ENCODE measurements at regions of chr4 and their contacts with region 1.

Region 1: GRCh38 chr4:116702951-116703350 is 382.4 kb downstream of the TRAM1L1 start:
- DNase-seq: peak in 2 of 7 donors; percentile 15
- H3K4me3 ChIP-seq: no peak overlapping the region
- H3K27ac ChIP-seq: no peak overlapping the region
- H3K4me1 ChIP-seq: no peaks in the 10 kb centered on the region
- H3K27me3 ChIP-seq: no peaks in the 10 kb centered on the region
- CTCF ChIP-seq: peak in 3 of 6 experiments; percentile 17 to 27 (median 20)
- POLR2A ChIP-seq: no peak

Region 2: DNA sequence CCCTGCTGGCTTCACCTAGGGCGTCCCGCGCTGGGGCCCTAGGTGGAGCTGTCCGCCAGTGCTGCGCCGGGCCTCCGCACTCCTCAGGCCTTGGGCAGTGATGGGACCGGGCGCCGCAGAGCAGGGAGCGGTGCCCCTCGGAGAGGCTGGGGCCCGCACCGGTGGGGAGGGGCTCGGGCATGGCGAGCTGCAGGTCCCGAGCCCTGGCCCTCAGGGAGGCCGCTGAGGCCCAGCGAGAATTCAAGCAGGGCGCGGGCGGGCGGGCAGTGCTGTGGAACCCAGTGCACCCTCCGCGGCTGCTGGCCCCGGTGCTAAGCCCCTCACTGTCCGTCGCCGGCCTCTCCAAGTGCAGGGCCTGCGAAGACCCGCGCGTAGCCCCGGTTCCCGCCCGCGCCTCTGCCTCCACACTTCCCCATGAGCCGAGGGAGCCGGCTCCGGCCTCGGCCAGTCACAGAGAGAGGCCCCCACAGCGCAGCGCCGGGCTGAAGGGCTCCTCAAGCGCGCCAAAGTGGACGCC is 1024.5 kb before region 1 on chr4:
- intact Hi-C with region 1: no loop called
- DNase-seq: no peak
- H3K4me3 ChIP-seq: no peak overlapping the region
- H3K27ac ChIP-seq: no peak overlapping the region
- H3K4me1 ChIP-seq: no peaks in the 10 kb centered on the region
- H3K27me3 ChIP-seq: no peaks in the 10 kb centered on the region
- CTCF ChIP-seq: no peak
- POLR2A ChIP-seq: no peak

Region 3: DNA sequence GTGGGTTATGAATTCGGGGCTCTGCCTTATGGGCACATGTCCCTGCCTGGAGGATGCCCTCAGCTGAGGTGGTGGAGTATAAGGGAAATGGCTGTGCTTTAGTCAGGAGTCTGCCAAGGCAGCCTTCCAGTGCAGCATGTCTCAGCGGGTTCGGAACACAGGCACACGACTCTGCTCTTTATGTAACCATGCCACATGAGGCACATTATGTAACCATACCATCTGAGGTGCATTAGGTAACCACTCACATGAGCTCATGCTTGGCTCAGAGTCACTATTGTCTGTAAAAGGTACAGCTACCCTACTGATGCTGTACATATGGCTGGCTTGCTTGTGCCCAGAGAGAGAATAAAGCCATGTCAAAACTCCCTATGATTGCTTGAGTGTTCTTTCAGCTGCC is 341.2 kb before region 1 on chr4:
- intact Hi-C with region 1: loop called in 1 of 2 experiments (anchors 10 kb)
- DNase-seq: no peak
- H3K4me3 ChIP-seq: no peak overlapping the region
- H3K27ac ChIP-seq: no peak overlapping the region
- H3K4me1 ChIP-seq: no peaks in the 10 kb centered on the region
- H3K27me3 ChIP-seq: no peaks in the 10 kb centered on the region
- CTCF ChIP-seq: no peak
- POLR2A ChIP-seq: no peak

Region 4: GRCh38 chr4:117084866-117085701 is 382.1 kb after region 1 on chr4 and contains the start of gene TRAM1L1:
- intact Hi-C with region 1: no loop called
- DNase-seq: peak; percentile 62 to 78 (median 64)
- H3K4me3 ChIP-seq: peak within 1 kb of the TSS in 2 of 4 donors; percentile 29 to 62
- H3K27ac ChIP-seq: peak within 1 kb of the TSS in 2 of 5 donors; percentile 38 to 51
- H3K4me1 ChIP-seq: no peaks in the 10 kb centered on the region
- H3K27me3 ChIP-seq: no peaks in the 10 kb centered on the region
- CTCF ChIP-seq: peak in 3 of 6 experiments; percentile 3 to 10 (median 8)
- POLR2A ChIP-seq: no peak
- total RNA-seq, gene TRAM1L1: 1.4 to 8.7 (median 3.4) TPM

Region 5: DNA sequence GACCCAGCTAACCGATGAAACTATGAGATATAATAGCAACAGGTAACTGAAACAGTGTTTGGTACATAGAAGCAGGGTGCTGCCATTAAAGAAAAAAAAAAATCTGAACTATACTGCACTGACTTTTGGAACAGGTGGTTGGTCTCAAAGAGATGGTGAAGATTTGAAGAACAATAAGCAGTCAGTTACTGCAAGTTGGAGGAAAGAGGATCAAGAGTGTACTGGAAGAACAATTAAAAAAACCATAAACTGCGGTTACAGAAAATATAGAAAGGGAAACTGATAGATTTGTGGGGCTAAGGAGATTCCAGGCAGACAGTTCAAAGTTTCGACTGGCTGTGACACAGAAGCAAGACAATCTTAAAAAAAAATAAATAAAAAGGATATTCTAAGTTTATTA is 564.4 kb after region 1 on chr4:
- intact Hi-C with region 1: no loop called
- DNase-seq: no peak
- H3K4me3 ChIP-seq: no peak overlapping the region
- H3K27ac ChIP-seq: no peak overlapping the region
- H3K4me1 ChIP-seq: no peaks in the 10 kb centered on the region
- H3K27me3 ChIP-seq: no peaks in the 10 kb centered on the region
- CTCF ChIP-seq: no peak
- POLR2A ChIP-seq: no peak

Region 6: GRCh38 chr4:117417856-117418255 is 714.9 kb after region 1 on chr4:
- intact Hi-C with region 1: no loop called
- DNase-seq: no peak
- H3K4me3 ChIP-seq: no peak overlapping the region
- H3K27ac ChIP-seq: no peak overlapping the region
- H3K4me1 ChIP-seq: no peaks in the 10 kb centered on the region
- H3K27me3 ChIP-seq: no peaks in the 10 kb centered on the region
- CTCF ChIP-seq: no peak
- POLR2A ChIP-seq: no peak